Activated naive CD4-positive, alpha-beta T cell treated with anti-CD3 and anti-CD28 coated beads for 36 hours (primary cell): ENCODE measurements at regions of chr2 and their contacts with region 1.

Region 1: GRCh38 chr2:241300000-241300399 is 15.5 kb downstream of the HDLBP start:
- DNase-seq: peak; percentile 65
- H3K4me3 Mint-ChIP-seq: no peak overlapping the region
- H3K27ac Mint-ChIP-seq: no peak overlapping the region
- H3K4me1 Mint-ChIP-seq: peaks cover 50% of the 10 kb centered on the region
- H3K27me3 Mint-ChIP-seq: no peaks in the 10 kb centered on the region

Region 2: GRCh38 chr2:240472078-240472790 is 827.8 kb before region 1 on chr2:
- CTCF ChIA-PET with region 1: no interaction called
- intact Hi-C with region 1: no loop called
- DNase-seq: no peak
- H3K4me3 Mint-ChIP-seq: no peak overlapping the region
- H3K27ac Mint-ChIP-seq: no peak overlapping the region
- H3K4me1 Mint-ChIP-seq: no peaks in the 10 kb centered on the region
- H3K27me3 Mint-ChIP-seq: no peaks in the 10 kb centered on the region

Region 3: GRCh38 chr2:241081643-241082340 is 218.2 kb before region 1 on chr2:
- CTCF ChIA-PET with region 1: no interaction called
- intact Hi-C with region 1: loop called (anchors 1 kb)
- DNase-seq: no peak
- H3K4me3 Mint-ChIP-seq: no peak overlapping the region
- H3K27ac Mint-ChIP-seq: peak overlapping the region; percentile 24
- H3K4me1 Mint-ChIP-seq: peaks cover 7% of the 10 kb centered on the region
- H3K27me3 Mint-ChIP-seq: no peaks in the 10 kb centered on the region

Region 4: GRCh38 chr2:241102239-241102803 is 197.7 kb before region 1 on chr2 and contains the start of gene MTERF4:
- CTCF ChIA-PET with region 1: no interaction called
- intact Hi-C with region 1: no loop called
- DNase-seq: peak; percentile 93
- H3K4me3 Mint-ChIP-seq: peak within 1 kb of the TSS; percentile 97
- H3K27ac Mint-ChIP-seq: peak within 1 kb of the TSS; percentile 99
- H3K4me1 Mint-ChIP-seq: peaks cover 62% of the 10 kb centered on the region
- H3K27me3 Mint-ChIP-seq: no peaks in the 10 kb centered on the region
- total RNA-seq, gene MTERF4: 35.0 to 38.6 TPM

Region 5: DNA sequence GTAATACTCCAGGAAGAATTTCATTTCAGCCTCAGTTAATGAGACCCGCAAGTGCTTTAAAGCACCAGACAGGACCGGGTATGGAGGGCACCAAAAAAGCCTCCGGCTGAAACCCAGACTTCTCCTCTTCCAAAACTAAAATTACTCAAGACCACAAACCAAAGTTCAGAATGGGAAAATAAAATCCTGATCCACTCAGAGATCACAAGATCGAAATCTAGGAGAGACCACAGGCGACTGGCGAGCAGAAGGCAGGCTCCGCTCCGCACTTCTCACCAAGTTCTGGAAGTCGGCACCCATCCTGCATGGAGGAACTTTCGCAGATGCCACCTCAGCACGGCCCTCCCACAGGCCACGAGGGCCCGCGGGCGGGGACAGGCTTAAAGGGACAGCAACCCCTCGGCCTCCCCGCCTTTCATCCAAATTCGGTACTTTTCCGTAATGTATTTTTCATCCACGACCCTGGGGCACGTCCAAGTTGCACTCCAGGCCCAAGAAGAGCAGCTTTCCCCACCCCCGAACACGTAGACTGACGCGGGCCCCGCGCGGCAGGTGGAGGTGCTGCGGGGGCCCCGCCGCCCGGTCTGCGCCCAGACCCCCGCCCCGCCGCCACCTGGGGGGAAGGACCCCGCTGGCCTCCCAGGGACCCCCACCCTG is 28.2 kb before region 1 on chr2:
- CTCF ChIA-PET with region 1: no interaction called
- intact Hi-C with region 1: loop called (anchors 2 kb)
- DNase-seq: peak; percentile 54
- H3K4me3 Mint-ChIP-seq: peak overlapping the region; percentile 81
- H3K27ac Mint-ChIP-seq: peak overlapping the region; percentile 64
- H3K4me1 Mint-ChIP-seq: peaks cover 32% of the 10 kb centered on the region
- H3K27me3 Mint-ChIP-seq: no peaks in the 10 kb centered on the region